Activated CD8-positive, alpha-beta T cell treated with anti-CD3 and anti-CD28 coated beads, Interleukin-2, amount 10 ng/mL, durations not matched to agents 7 days and 5 days (primary cell): ENCODE measurements at regions of chr17 and their contacts with region 1.

Region 1: GRCh38 chr17:75679706-75680442 is 12.7 kb downstream of the SAP30BP start:
- DNase-seq: no peak
- ATAC-seq: no peak
- H3K4me3 Mint-ChIP-seq: no peak overlapping the region
- H3K27ac Mint-ChIP-seq: no peak overlapping the region
- H3K4me1 Mint-ChIP-seq: peaks cover 6% of the 10 kb centered on the region
- H3K27me3 Mint-ChIP-seq: no peaks in the 10 kb centered on the region

Region 2: DNA sequence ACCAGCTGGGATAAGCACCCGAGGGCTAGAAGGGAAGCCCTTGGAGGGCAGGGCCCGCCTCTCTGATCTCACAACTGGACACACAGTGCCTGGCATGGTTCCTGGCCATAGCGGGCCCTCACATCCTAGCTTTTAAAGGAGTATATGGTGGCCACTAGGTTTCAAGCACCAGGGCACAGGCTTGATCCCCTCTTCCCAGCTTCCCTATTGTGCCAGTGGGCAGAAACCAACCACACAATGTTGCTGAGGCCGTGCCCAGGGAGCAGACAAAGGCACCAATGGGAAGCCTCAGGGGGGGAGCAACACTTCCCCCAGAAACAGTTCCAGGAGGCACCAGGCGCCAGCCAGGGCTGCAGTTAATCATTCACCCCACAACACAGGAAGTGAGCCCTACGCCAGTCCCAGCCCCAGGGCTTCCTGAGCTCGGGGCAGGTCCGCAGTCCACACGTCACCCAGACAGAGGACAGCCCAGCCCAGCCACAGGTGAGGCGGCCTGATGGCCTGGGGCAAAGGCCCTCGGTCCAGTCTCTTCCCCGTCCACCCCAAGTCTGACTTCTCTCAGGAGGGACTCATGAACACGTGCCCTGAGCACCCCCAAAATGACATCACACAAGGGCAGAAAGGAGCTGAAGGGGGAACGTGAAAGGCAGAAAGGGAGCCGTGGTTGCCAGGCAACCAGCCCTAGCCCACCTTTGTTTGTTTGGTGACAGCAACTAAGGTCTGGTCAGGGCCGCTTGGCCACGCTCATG is 33.8 kb before region 1 on chr17:
- CTCF ChIA-PET with region 1: interaction called, 11 read pairs
- POLR2A ChIA-PET with region 1: no interaction called
- DNase-seq: peak; percentile 53
- ATAC-seq: peak; percentile 90
- H3K4me3 Mint-ChIP-seq: no peak overlapping the region
- H3K27ac Mint-ChIP-seq: peak overlapping the region; percentile 87
- H3K4me1 Mint-ChIP-seq: peaks cover 25% of the 10 kb centered on the region
- H3K27me3 Mint-ChIP-seq: no peaks in the 10 kb centered on the region

Region 3: GRCh38 chr17:75743625-75744215 is 63.8 kb after region 1 on chr17:
- CTCF ChIA-PET with region 1: interaction called, 152 read pairs
- POLR2A ChIA-PET with region 1: interaction called, 5 read pairs
- DNase-seq: no peak
- ATAC-seq: no peak
- H3K4me3 Mint-ChIP-seq: no peak overlapping the region
- H3K27ac Mint-ChIP-seq: no peak overlapping the region
- H3K4me1 Mint-ChIP-seq: no peaks in the 10 kb centered on the region
- H3K27me3 Mint-ChIP-seq: peaks cover 2% of the 10 kb centered on the region